Activated T-helper 2 cell treated with anti-CD3 and anti-CD28 coated beads, Interferon-gamma antibody, Interleukin-2, Interleukin-4, amounts not matched to agents 10 μg/mL and 5 μg/mL and 100 μg/mL, durations not matched to agents 14 hours and 24 hours and 36 hours (primary cell): ENCODE measurements at regions of chr22 and their contacts with region 1.

Region 1: DNA sequence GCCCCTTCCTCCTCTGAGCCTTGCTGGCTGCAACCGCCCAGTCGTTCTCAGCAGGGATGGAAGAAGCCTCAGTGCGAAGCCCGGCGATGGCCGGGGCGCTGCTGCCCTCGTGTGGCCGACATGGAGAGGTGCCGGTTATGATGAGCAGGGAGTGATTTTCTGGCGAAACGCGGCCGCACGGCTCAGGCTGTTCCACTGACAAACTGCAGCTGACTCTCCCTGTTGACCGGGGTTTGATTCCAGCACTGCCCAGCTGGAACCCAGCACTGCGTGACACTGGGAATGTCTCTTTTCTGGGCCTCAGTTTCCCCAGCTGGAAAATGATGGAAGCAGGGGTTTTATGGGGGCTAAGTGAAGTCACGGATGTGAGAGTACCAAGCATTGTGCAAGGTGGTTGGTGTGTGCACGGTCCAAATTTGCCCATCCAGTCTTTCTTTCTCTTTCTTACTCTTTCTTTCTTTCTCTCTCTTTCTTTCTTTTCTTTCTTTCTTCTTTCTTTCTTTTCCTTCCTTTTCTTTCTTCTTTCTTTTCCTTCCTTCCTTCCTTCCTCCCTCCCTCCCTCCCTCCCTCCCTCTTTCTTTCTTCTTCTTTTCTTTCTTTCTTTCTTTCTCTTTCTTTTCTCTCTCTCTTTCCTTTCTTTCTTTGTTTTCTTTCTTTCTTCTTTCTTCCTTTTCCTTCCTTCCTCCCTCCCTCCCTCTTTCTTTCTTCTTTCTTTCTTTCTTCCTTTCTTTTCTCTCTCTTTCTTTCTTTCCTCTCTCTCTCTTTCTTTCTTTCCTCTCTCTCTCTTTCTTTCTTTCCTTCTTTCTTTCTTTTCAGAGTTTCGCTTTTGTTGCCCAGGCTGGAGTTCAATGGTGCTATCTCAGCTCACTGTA is 25.8 kb upstream of the MPPED1 start:
- DNase-seq: peak; percentile 72
- H3K4me3 Mint-ChIP-seq: no peak overlapping the region
- H3K27ac Mint-ChIP-seq: no peak overlapping the region
- H3K4me1 Mint-ChIP-seq: peaks cover 14% of the 10 kb centered on the region
- H3K27me3 Mint-ChIP-seq: peaks cover 42% of the 10 kb centered on the region

Region 2: GRCh38 chr22:43230971-43231723 is 154.9 kb before region 1 on chr22:
- intact Hi-C with region 1: loop called (anchors 1 kb)
- DNase-seq: peak; percentile 54
- H3K4me3 Mint-ChIP-seq: no peak overlapping the region
- H3K27ac Mint-ChIP-seq: no peak overlapping the region
- H3K4me1 Mint-ChIP-seq: peaks cover 5% of the 10 kb centered on the region
- H3K27me3 Mint-ChIP-seq: peaks cover 1% of the 10 kb centered on the region

Region 3: DNA sequence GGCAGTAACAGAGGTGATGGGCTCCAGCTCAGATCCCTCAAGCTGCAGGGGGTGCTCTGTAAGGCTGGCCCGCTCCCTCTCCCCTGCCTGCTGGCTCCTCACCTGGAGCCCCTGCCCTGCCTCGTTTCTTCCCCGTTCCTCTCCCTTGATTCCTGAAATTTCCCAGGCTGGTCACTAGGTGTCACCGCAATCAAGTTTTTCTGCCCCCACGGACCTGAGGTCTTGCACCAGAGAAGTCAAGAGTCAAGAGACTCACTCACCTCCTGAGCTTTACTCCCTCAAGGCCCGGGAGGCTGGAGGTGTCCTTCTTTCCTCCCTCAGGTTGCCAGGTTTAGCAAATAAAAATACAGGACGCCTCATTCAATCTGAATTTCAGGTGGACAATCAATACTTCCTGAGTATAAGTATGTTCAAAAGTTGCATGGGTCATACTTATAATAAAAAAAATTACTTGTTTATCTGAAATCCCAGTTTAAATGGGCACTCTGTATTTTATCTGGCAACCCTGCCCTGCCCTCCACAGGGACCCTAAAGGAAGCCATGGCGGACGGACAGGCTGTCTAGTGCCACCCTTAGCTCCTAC is 112.0 kb before region 1 on chr22:
- intact Hi-C with region 1: loop called (anchors 1 kb)
- DNase-seq: peak; percentile 29
- H3K4me3 Mint-ChIP-seq: no peak overlapping the region
- H3K27ac Mint-ChIP-seq: no peak overlapping the region
- H3K4me1 Mint-ChIP-seq: peaks cover 7% of the 10 kb centered on the region
- H3K27me3 Mint-ChIP-seq: peaks cover 2% of the 10 kb centered on the region

Region 4: GRCh38 chr22:44625981-44626687 is 1240.1 kb after region 1 on chr22:
- intact Hi-C with region 1: loop called (anchors 5 kb)
- DNase-seq: peak; percentile 73
- H3K4me3 Mint-ChIP-seq: no peak overlapping the region
- H3K27ac Mint-ChIP-seq: no peak overlapping the region
- H3K4me1 Mint-ChIP-seq: peaks cover 2% of the 10 kb centered on the region
- H3K27me3 Mint-ChIP-seq: peaks cover 3% of the 10 kb centered on the region